ENCODE measurements at regions of chr1 and their contacts with region 1.

Region 1: GRCh38 chr1:197825541-197825940 is 50.3 kb upstream of the DENND1B start:
- DNase-seq: no peak
- H3K4me3 ChIP-seq: no peak overlapping the region
- H3K27ac ChIP-seq: no peak overlapping the region
- H3K4me1 ChIP-seq: no peaks in the 10 kb centered on the region
- H3K27me3 ChIP-seq: no peaks in the 10 kb centered on the region
- CTCF ChIP-seq: no peak

Region 2: GRCh38 chr1:197783510-197783948 is 42.0 kb before region 1 on chr1:
- CTCF ChIA-PET with region 1: no interaction called
- POLR2A ChIA-PET with region 1: no interaction called
- intact Hi-C with region 1: loop called (anchors 1 kb)
- DNase-seq: no peak
- H3K4me3 ChIP-seq: no peak overlapping the region
- H3K27ac ChIP-seq: no peak overlapping the region
- H3K4me1 ChIP-seq: no peaks in the 10 kb centered on the region
- H3K27me3 ChIP-seq: no peaks in the 10 kb centered on the region
- CTCF ChIP-seq: no peak

Measured in A673 (cell line).